B cell (primary cell): ENCODE measurements at regions of chr16 and their contacts with region 1.

Region 1: DNA sequence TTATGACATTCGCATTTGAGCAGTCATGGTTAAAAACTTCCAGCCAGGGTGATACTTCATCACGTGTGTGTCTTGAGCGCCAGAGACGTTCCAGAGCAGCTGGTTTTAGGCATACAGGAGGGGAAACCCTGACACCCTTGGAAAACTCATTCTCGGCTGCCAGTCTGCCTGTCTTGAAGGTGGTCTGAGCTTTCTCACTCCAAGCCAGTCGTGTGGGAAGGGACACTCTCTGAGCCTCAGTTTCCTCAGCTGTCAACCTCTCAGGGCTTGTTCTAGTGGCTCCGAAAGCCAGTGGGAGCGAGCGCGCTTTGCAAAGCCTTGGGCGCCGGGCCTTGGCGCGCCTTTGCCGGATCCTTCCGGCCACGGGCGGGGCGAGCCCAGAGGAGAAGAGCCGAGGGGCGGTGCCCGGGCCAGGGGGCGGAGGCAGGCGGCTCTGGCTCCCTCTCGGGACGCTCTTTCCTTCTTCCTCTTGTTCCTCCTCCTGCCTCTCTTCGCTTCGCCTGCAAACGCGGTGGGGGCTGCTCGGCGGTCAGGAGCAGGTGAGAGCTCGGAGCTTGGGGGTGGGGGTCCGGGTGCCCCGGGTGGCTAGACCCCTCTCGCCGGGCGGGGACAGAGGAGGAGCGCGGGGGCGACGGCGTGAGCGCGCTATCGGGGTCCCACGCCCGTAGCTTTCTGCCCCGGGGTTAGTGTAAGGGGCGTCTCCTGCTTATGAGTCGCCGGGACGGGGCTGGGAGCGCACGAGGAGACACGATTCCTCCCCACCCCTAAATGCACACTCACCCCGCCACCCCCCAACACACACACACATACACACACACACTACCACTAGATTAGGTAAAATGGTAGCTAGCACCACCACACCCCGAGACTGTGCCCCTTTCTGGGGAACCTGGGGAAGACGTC is at the start of gene LDAF1:
- DNase-seq: peak; percentile 82
- ATAC-seq: peak; percentile 90
- H3K4me3 ChIP-seq: peak within 1 kb of the TSS; percentile 71 to 93 (median 85)
- H3K4me3 Mint-ChIP-seq: peak within 1 kb of the TSS; percentile 96
- H3K27ac ChIP-seq: peak within 1 kb of the TSS; percentile 14 to 46
- H3K27ac Mint-ChIP-seq: peak within 1 kb of the TSS; percentile 88
- H3K4me1 ChIP-seq: peaks cover 13 to 18% of the 10 kb centered on the region in 2 donors
- H3K4me1 Mint-ChIP-seq: peaks cover 22% of the 10 kb centered on the region
- H3K27me3 ChIP-seq: no peaks in the 10 kb centered on the region
- H3K27me3 Mint-ChIP-seq: no peaks in the 10 kb centered on the region
- CTCF ChIP-seq: no peak
- total RNA-seq, gene LDAF1: 21.1 and 21.9 TPM in 2 replicates

Region 2: DNA sequence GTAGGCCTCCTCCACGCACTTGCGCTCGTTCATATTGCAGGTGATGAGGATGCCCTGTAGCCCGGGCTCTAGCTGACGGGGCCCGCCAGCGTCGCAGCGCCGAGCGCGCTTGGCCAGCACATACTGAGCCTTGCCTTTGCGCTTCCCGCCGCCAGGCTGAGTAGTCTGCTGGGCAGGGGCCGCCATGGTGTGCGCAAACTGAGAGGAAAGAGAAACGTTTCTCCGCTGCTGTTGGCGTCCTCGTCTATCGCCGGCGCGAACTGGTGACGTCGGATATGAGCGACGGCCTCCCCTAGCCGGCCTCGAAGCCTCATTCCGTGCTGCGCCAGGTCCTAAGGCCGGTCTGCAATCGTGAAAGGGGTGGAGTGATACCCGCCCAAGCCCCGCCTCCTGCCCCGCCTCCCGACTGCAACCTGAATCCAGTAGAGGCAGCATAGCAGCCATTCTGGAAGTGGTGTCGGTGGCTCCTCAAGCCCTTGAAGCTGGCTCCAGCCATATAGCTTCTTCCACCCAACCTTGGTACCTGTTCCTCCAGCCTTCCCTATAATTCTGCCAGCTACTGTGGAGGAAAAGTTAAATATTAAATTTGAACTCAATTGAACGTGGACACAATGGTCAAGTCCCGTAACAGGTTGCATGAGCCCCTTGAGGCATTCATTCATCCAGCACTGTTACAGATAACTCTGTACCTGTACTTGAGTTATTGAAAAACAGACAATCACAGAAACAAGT is 416.7 kb before region 1 on chr16 and contains the start of gene THUMPD1:
- CTCF ChIA-PET with region 1: no interaction called
- POLR2A ChIA-PET with region 1: no interaction called
- intact Hi-C with region 1: loop called (anchors 5 kb)
- DNase-seq: peak; percentile 96
- ATAC-seq: peak; percentile 91
- H3K4me3 ChIP-seq: peak within 1 kb of the TSS; percentile 74 to 100 (median 90)
- H3K4me3 Mint-ChIP-seq: peak within 1 kb of the TSS; percentile 95
- H3K27ac ChIP-seq: peak within 1 kb of the TSS; percentile 90 to 97
- H3K27ac Mint-ChIP-seq: peak within 1 kb of the TSS; percentile 97
- H3K4me1 ChIP-seq: peaks cover 19 to 23% of the 10 kb centered on the region in 2 donors
- H3K4me1 Mint-ChIP-seq: peaks cover 22% of the 10 kb centered on the region
- H3K27me3 ChIP-seq: no peaks in the 10 kb centered on the region
- H3K27me3 Mint-ChIP-seq: no peaks in the 10 kb centered on the region
- CTCF ChIP-seq: no peak
- total RNA-seq, gene THUMPD1: 52.5 and 54.3 TPM in 2 replicates

Region 3: GRCh38 chr16:21554795-21555585 is 396.5 kb after region 1 on chr16:
- CTCF ChIA-PET with region 1: interaction called, 19 read pairs
- POLR2A ChIA-PET with region 1: no interaction called
- intact Hi-C with region 1: loop called (anchors 10 kb)
- DNase-seq: peak; percentile 100
- ATAC-seq: peak; percentile 98
- H3K4me3 ChIP-seq: peak overlapping the region in 4 of 5 experiments; percentile 15 to 46 (median 34)
- H3K4me3 Mint-ChIP-seq: peak overlapping the region; percentile 84
- H3K27ac ChIP-seq: peak overlapping the region; percentile 70 to 72
- H3K27ac Mint-ChIP-seq: peak overlapping the region; percentile 94
- H3K4me1 ChIP-seq: peaks cover 27 to 34% of the 10 kb centered on the region in 2 donors
- H3K4me1 Mint-ChIP-seq: peaks cover 27% of the 10 kb centered on the region
- H3K27me3 ChIP-seq: no peaks in the 10 kb centered on the region
- H3K27me3 Mint-ChIP-seq: no peaks in the 10 kb centered on the region
- CTCF ChIP-seq: peak; percentile 100

Region 4: DNA sequence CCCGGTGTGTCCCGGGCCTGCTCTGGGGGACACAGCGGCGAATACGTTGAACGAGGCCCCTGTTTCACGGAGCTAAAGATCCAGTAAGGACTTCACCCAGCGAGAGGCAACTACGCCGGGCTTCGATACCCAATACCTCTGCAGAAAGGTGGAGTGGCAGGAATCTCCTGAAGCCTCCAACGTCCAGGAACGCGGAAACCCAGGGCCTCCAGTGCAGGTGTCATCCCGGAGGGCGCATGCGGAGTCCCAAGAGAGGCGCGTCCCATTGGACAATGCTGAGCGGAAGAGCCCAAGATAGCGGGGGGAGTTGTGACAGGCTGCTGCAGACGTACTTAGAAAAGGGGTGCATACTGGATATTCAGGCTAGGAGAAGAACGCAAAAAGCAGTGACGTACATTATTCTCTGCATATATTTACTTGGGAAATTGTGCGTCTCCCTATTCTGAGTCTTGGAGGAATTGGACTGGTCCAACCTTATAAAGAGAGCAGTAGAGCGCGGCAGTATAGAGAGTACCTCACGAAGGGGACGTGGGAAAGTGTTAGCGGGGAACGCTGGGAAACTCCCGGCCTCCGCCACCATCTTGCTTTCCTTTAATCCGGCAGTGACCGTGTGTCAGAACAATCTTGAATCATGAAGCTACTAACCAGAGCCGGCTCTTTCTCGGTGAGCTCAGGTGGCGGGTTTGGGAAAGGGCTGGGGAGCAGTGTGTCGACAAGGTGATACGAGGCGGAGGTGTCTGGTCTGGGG is 794.5 kb after region 1 on chr16 and contains the start of gene UQCRC2:
- CTCF ChIA-PET with region 1: no interaction called
- POLR2A ChIA-PET with region 1: no interaction called
- intact Hi-C with region 1: loop called (anchors 5 kb)
- DNase-seq: peak; percentile 96
- ATAC-seq: peak; percentile 91
- H3K4me3 ChIP-seq: peak within 1 kb of the TSS; percentile 74 to 100 (median 97)
- H3K4me3 Mint-ChIP-seq: peak within 1 kb of the TSS; percentile 98
- H3K27ac ChIP-seq: peak within 1 kb of the TSS; percentile 88 to 97
- H3K27ac Mint-ChIP-seq: peak within 1 kb of the TSS; percentile 97
- H3K4me1 ChIP-seq: peaks cover 34 to 45% of the 10 kb centered on the region in 2 donors
- H3K4me1 Mint-ChIP-seq: peaks cover 65% of the 10 kb centered on the region
- H3K27me3 ChIP-seq: no peaks in the 10 kb centered on the region
- H3K27me3 Mint-ChIP-seq: no peaks in the 10 kb centered on the region
- CTCF ChIP-seq: no peak
- total RNA-seq, gene UQCRC2: 150 and 155 TPM in 2 replicates

Region 5: DNA sequence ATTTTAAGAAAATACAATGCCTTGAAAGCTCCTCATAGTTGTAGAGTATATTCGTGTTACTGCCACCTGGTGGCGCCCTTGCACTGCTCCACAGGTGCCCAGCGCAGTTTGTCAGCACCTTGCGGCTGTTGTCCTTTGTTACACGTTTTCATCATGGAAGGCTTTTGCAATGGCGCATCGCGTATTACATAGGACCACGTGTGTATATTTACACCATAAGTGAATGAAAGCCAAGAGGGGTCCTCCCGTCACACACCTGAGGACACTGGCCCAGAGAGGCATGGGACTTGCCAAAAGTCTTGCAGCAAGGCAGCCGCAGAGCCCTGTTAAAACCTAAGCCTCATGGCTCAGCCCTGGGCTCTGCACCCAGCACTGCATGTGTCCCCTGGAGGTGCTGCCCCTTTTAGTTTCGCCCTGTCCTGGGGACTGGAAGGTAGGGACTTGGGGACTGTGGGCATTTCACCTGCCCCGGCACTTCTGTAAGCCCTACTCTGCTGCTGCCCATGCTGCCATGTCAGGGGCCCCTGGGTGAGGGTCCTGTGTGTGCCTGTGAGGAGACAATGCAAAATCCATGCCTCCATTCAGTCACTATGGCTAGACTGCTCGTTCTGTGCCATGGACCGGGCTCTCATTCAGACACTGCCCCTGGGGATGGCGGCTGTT is 1163.0 kb after region 1 on chr16:
- CTCF ChIA-PET with region 1: interaction called, 7 read pairs
- POLR2A ChIA-PET with region 1: no interaction called
- intact Hi-C with region 1: loop called (anchors 5 kb)
- DNase-seq: peak; percentile 74
- ATAC-seq: peak; percentile 66
- H3K4me3 ChIP-seq: no peak overlapping the region
- H3K4me3 Mint-ChIP-seq: no peak overlapping the region
- H3K27ac ChIP-seq: no peak overlapping the region
- H3K27ac Mint-ChIP-seq: no peak overlapping the region
- H3K4me1 ChIP-seq: no peaks in the 10 kb centered on the region
- H3K4me1 Mint-ChIP-seq: no peaks in the 10 kb centered on the region
- H3K27me3 ChIP-seq: no peaks in the 10 kb centered on the region
- H3K27me3 Mint-ChIP-seq: no peaks in the 10 kb centered on the region
- CTCF ChIP-seq: peak; percentile 97

Region 6: GRCh38 chr16:22374311-22375116 is 1216.1 kb after region 1 on chr16 and contains the start of gene CDR2:
- CTCF ChIA-PET with region 1: no interaction called
- POLR2A ChIA-PET with region 1: no interaction called
- intact Hi-C with region 1: loop called (anchors 5 kb)
- DNase-seq: peak; percentile 97
- ATAC-seq: peak; percentile 96
- H3K4me3 ChIP-seq: peak within 1 kb of the TSS; percentile 8 to 92 (median 80)
- H3K4me3 Mint-ChIP-seq: peak within 1 kb of the TSS; percentile 98
- H3K27ac ChIP-seq: peak within 1 kb of the TSS in 1 of 2 donors; percentile 54
- H3K27ac Mint-ChIP-seq: peak within 1 kb of the TSS; percentile 84
- H3K4me1 ChIP-seq: peaks cover 14 to 15% of the 10 kb centered on the region in 2 donors
- H3K4me1 Mint-ChIP-seq: peaks cover 20% of the 10 kb centered on the region
- H3K27me3 ChIP-seq: no peaks in the 10 kb centered on the region
- H3K27me3 Mint-ChIP-seq: no peaks in the 10 kb centered on the region
- CTCF ChIP-seq: no peak
- total RNA-seq, gene CDR2: 10.5 and 11.3 TPM in 2 replicates